ENCODE measurements at regions of chr13 and their contacts with region 1.

Region 1: DNA sequence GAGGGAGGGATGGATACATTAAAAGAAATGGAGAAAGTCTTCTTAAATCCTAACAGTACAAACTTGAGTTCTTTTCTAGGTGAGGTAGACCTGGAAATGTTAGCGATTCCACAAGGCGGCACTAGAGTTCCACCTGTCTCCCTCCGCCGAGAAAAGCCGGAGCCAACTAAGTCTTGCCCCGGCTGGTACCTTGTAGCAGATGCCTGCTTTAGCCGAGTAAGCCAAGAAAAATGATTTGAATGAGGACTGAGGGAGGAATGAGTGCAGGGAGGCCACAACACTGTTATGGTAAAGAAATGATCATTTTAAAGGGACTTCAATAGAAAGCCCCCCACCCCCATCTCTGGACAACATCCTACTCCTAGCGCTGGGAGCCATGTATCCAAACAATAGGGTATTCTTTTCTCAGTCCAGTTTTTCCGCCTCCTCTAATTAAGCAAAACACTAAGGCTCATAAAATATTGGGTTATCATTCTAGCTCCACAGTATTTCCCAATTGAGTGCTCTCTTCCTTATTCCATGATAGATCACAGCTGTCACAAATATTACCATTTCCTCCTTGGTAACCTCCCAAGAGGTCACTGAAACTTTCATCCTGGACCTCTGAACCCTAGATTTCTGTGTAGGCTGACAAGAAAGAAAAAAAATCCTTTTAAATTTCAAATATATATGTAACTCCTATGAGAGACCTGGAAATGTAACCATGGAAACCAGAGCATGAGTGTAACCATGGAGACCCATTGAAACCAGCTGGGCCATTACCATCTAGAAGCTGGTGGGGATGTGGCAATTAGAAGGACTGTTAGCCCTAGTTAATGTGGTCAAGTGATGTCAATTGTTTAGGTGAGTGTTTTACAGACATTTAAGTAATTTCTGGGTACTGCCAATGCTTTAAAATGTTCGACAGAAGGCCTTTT is 58.3 kb downstream of the GPALPP1 start:
- DNase-seq: peak; percentile 79
- H3K4me3 ChIP-seq: peak overlapping the region; percentile 40 to 48
- H3K27ac ChIP-seq: peak overlapping the region in 1 of 2 experiments; percentile 11; a peak in 1 of 4 replicates
- H3K4me1 ChIP-seq: peaks cover 0 to 7% of the 10 kb centered on the region in 2 experiments; a peak in 1 of 4 replicates
- H3K27me3 ChIP-seq: no peaks in the 10 kb centered on the region
- CTCF ChIP-seq: peak; percentile 92
- EP300 ChIP-seq: no peak; a peak in 1 of 4 replicates
- RAD21 ChIP-seq: peak; percentile 98

Region 2: GRCh38 chr13:45036206-45036605 is 11.4 kb before region 1 on chr13:
- CTCF ChIA-PET with region 1: interaction called, 30 read pairs
- POLR2A ChIA-PET with region 1: no interaction called
- DNase-seq: no peak
- H3K4me3 ChIP-seq: no peak overlapping the region
- H3K27ac ChIP-seq: no peak overlapping the region
- H3K4me1 ChIP-seq: no peaks in the 10 kb centered on the region
- H3K27me3 ChIP-seq: no peaks in the 10 kb centered on the region
- CTCF ChIP-seq: no peak
- EP300 ChIP-seq: no peak
- RAD21 ChIP-seq: no peak

Region 3: GRCh38 chr13:45280751-45281634 is 233.3 kb after region 1 on chr13:
- CTCF ChIA-PET with region 1: interaction called, 69 read pairs
- POLR2A ChIA-PET with region 1: interaction called, 4 read pairs
- DNase-seq: peak; percentile 73
- H3K4me3 ChIP-seq: no peak overlapping the region
- H3K27ac ChIP-seq: no peak overlapping the region
- H3K4me1 ChIP-seq: peaks cover 0 to 4% of the 10 kb centered on the region in 2 experiments; a peak in 1 of 4 replicates
- H3K27me3 ChIP-seq: no peaks in the 10 kb centered on the region
- CTCF ChIP-seq: peak; percentile 93
- EP300 ChIP-seq: peak in 1 of 2 experiments; percentile 41; a peak in 1 of 4 replicates
- RAD21 ChIP-seq: peak; percentile 88

Region 4: DNA sequence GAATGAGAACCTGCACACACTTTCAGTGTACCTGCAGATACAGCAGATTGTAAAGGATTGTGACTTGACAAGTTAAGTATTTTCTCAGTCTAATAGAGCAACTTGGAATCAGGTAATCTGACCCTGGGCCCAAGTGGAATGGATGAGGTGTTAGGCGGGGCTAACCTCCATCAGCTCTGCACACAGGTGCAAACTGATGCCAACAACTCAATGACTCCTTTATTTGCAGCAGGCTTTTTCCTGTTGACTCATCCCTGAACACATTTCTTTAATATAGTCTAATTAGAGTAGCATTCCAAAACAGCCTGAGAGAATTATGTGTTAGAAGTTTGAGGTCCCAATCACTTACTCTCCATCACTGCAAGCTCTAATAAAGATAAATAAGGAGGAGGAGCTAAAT is 244.5 kb after region 1 on chr13:
- CTCF ChIA-PET with region 1: interaction called, 20 read pairs
- POLR2A ChIA-PET with region 1: no interaction called
- DNase-seq: no peak
- H3K4me3 ChIP-seq: no peak overlapping the region
- H3K27ac ChIP-seq: no peak overlapping the region
- H3K4me1 ChIP-seq: peaks cover 0 to 8% of the 10 kb centered on the region in 2 experiments; a peak in 1 of 4 replicates
- H3K27me3 ChIP-seq: no peaks in the 10 kb centered on the region
- CTCF ChIP-seq: no peak
- EP300 ChIP-seq: no peak
- RAD21 ChIP-seq: no peak

Region 5: DNA sequence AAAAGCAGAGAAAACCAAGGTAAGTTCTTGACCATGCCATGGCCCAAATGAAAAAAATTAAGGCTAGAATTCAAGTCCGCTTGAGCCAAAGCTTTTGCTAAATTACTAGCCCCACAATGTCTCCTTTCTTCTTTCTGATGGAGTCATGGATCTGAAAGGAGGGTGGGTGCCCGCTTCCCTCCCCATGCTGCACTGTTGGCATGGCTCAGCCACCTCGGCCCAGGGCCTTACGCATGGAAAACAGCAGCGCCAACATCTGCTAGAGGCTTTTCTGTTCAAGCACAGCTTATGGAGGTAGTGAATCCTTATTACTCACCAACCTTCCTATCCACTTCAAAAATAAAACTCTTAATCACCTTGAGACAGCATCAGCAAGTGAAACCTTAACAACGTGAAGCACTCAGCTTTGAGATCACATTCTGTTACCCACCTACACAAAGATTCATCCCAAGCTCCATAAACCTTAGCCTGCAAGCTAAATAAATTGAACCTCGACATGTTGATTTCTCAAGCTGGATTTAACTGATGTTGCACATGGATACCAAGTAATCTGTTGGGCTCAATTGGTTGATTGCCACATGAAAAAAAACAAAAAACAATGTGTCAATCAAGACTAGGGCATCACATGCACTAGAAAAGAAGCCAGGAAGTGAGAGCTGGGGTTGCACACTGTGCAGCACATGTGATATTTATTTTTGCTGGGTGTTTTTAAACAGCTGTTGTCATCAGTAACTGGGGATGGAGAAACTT is 250.0 kb after region 1 on chr13:
- CTCF ChIA-PET with region 1: interaction called, 34 read pairs
- POLR2A ChIA-PET with region 1: no interaction called
- DNase-seq: no peak
- H3K4me3 ChIP-seq: no peak overlapping the region
- H3K27ac ChIP-seq: no peak overlapping the region
- H3K4me1 ChIP-seq: no peaks in the 10 kb centered on the region; a peak in 1 of 4 replicates
- H3K27me3 ChIP-seq: no peaks in the 10 kb centered on the region
- CTCF ChIP-seq: no peak
- EP300 ChIP-seq: no peak
- RAD21 ChIP-seq: no peak

Region 6: DNA sequence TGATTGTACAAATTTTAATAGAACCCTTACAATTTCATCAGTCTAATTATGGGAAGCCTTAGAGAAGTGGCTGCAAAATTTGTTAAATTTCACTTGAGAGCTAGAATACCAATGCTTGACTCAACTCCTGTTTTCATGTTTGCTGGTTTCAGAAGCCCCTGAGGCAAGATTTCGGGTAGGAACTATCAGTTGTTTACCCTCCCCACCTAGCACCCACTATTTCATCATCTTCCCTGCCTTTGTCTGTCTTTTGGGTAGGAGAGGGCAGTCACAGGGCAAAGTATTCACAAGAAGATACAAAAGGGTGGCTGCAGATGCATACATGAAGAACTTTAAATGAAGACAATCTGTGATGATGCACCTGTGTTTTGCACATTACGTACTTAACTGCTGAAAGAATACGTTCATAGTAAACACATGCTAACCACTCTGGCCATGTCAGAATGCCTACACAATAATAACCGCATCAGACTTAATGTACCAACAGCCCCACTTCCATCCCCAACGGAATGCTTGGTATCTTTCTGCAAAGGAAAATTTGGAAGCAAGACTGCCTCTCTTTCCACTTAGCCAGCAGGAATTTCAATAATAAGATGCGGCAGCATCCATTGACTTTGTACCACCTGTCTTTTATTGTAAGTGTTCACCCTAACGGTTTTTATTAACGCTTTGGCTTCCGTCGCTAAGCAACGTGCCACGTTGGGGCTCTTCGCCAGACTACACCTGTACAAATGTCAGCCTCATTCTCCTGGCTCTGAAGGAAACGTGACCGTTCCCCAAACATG is 262.9 kb after region 1 on chr13:
- CTCF ChIA-PET with region 1: interaction called, 78 read pairs
- POLR2A ChIA-PET with region 1: no interaction called
- DNase-seq: no peak
- H3K4me3 ChIP-seq: peak overlapping the region; percentile 34 to 46
- H3K27ac ChIP-seq: no peak overlapping the region
- H3K4me1 ChIP-seq: peaks cover 0 to 8% of the 10 kb centered on the region in 2 experiments; a peak in 1 of 4 replicates
- H3K27me3 ChIP-seq: no peaks in the 10 kb centered on the region
- CTCF ChIP-seq: no peak
- EP300 ChIP-seq: no peak
- RAD21 ChIP-seq: no peak

Region 7: DNA sequence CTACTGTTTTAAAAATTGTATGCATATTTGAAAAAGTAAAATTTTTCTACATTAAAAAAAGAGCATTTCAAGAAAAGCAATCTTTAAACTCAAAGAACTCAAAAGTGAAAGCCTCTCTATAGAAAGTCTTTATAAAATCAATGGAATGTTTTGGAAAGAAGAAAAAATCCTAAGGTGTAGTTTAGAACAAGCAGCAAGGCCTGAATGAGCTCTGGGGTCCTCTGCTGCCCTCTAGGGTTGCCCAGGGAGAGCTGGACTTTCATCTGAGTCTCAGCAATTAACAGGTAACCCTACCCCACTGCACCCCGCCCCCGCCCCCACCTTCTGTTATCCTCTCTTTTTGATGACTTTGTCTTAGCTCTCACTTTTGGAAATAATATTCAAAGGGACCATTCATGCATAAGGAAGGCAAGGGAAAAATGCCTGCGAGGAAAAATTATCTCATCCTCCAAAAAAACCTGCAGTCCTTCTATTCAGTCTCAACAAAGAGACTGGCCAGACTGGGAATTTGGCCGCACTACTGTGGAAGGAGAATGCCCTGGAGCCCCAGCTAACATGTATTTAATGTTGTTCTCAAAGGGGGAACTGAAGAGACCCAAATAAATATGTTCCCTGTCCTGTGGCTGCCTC is 346.4 kb after region 1 on chr13:
- CTCF ChIA-PET with region 1: interaction called, 13 read pairs
- POLR2A ChIA-PET with region 1: no interaction called
- DNase-seq: peak; percentile 81
- H3K4me3 ChIP-seq: no peak overlapping the region
- H3K27ac ChIP-seq: no peak overlapping the region
- H3K4me1 ChIP-seq: no peaks in the 10 kb centered on the region; a peak in 1 of 4 replicates
- H3K27me3 ChIP-seq: no peaks in the 10 kb centered on the region
- CTCF ChIP-seq: peak; percentile 79
- EP300 ChIP-seq: no peak
- RAD21 ChIP-seq: peak; percentile 73